OCI-LY7 (cell line): ENCODE measurements at regions of chr5 and their contacts with region 1.

Region 1: GRCh38 chr5:138178516-138179276 is at the starts of genes BRD8 and KIF20A:
- DNase-seq: peak; percentile 95
- H3K4me3 ChIP-seq: peak within 1 kb of the TSS; percentile 88
- H3K27ac ChIP-seq: peak within 1 kb of the TSS; percentile 76
- H3K4me1 ChIP-seq: peaks cover 17% of the 10 kb centered on the region
- CTCF ChIP-seq: no peak
- total RNA-seq, gene BRD8: 57.7 and 71.7 TPM in 2 replicates
- total RNA-seq, gene KIF20A: 63.1 and 74.5 TPM in 2 replicates

Region 2: DNA sequence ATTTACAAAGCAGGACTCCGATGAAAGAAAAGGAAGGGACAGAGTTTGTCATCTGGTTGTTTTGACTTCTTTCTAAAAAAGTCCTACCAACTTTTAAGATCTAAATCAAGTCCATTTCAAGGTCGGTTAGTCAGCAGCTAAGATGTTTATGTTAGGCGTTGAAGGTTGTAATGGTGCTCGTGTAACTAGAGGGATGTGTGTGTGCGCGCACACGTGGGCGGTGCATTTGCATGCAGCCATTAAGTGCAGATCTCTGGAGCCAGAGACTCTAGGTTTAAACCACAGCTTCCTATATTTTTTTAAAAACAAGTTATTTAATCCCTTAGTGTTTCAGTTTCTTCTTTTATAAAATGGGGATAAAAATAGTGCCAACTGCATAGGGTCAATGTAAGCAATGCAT is 1908.7 kb before region 1 on chr5:
- CTCF ChIA-PET with region 1: no interaction called
- POLR2A ChIA-PET with region 1: no interaction called
- intact Hi-C with region 1: no loop called
- DNase-seq: no peak
- H3K4me3 ChIP-seq: no peak overlapping the region
- H3K27ac ChIP-seq: no peak overlapping the region
- H3K4me1 ChIP-seq: no peaks in the 10 kb centered on the region
- CTCF ChIP-seq: no peak

Region 3: DNA sequence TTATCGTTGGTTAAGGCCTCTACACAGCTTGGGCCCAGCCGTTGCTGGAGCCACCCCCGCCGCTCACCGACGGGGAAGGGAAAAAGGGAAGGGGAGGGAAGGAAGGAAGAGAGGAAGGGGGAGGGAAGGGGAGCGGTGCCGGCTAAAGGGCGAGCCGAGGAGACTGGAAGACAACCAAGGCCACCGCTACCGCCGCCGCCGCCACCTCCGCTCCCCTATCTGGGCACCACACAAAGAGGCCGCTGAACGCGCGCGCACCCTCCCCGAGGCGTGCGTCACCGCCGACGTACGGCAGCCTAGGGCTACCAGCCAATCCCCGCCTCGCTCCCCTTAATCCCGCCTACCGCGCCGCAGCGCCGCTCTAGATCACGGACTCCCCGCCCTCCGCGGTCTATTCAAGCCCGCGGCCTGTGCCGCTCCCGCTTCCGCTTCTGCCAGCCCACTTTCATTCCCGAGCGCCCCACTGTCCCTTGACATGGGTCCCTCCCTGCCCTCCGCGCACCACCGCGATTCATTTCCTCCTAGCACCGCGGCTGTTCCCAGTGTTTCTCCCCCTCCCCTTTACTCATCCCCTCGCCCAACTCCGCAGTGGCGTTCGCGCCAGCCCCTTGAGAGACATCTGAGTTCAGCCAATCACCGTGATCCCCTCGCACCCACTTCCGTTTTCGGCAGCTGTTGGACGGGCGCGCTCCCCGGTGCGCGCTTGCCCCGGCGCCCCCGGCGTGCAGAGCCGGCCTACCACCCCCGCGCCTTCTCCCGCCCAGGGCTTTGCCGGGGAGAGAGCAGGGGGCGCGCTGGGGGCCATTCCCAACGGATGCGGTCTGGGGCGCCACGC is 424.4 kb before region 1 on chr5 and contains the start of gene HNRNPA0:
- CTCF ChIA-PET with region 1: no interaction called
- POLR2A ChIA-PET with region 1: interaction called, 4 read pairs
- intact Hi-C with region 1: loop called (anchors 1 kb)
- DNase-seq: peak; percentile 98
- H3K4me3 ChIP-seq: peak within 1 kb of the TSS; percentile 99
- H3K27ac ChIP-seq: peak within 1 kb of the TSS; percentile 72
- H3K4me1 ChIP-seq: peaks cover 23% of the 10 kb centered on the region
- CTCF ChIP-seq: no peak
- total RNA-seq, gene HNRNPA0: 20.6 and 25.8 TPM in 2 replicates

Region 4: GRCh38 chr5:138282920-138283742 is 104.4 kb after region 1 on chr5:
- CTCF ChIA-PET with region 1: no interaction called
- POLR2A ChIA-PET with region 1: no interaction called
- intact Hi-C with region 1: loop called (anchors 2 kb)
- DNase-seq: peak; percentile 30
- H3K4me3 ChIP-seq: no peak overlapping the region
- H3K27ac ChIP-seq: no peak overlapping the region
- H3K4me1 ChIP-seq: no peaks in the 10 kb centered on the region
- CTCF ChIP-seq: peak; percentile 64

Region 5: DNA sequence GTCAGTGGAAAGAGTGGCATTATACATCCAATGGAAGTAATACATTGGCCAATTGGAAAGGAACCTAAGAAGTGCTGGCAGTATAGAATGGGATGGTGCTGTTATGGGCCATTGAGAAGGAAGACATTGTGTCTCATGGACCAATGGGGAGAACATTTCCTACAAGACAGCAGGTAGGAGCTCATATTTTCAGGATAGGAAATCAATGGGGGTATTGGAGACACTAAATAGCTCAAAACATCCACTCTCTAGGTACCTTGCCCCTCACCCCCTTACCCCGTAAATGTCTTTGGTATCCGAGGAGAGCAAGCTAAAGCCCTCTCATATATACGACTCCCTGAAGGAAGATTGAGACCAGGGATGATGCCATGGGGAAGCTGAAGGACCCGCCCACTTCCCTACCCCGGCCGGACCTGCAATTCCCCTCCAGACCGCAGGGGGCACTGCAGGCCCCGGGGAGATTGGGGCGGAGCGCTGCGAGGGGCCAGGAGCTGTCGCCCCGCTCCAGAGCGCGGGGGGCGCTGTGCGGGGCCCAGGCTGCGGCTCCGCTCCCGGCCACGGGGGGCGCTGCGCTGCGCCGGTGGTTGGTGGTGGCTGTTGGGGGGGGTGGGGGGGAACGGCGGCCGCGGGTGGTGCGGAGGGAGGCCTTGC is 173.5 kb after region 1 on chr5 and contains the start of gene KDM3B:
- CTCF ChIA-PET with region 1: interaction called, 3 read pairs
- POLR2A ChIA-PET with region 1: interaction called, 11 read pairs
- intact Hi-C with region 1: loop called (anchors 2 kb)
- DNase-seq: peak; percentile 90
- H3K4me3 ChIP-seq: peak within 1 kb of the TSS; percentile 98
- H3K27ac ChIP-seq: peak within 1 kb of the TSS; percentile 73
- H3K4me1 ChIP-seq: peaks cover 19% of the 10 kb centered on the region
- CTCF ChIP-seq: peak; percentile 91
- total RNA-seq, gene KDM3B: 51.1 and 57.1 TPM in 2 replicates

Region 6: GRCh38 chr5:138449501-138450239 is 271.0 kb after region 1 on chr5:
- CTCF ChIA-PET with region 1: interaction called, 10 read pairs
- POLR2A ChIA-PET with region 1: no interaction called
- intact Hi-C with region 1: loop called (anchors 1 kb)
- DNase-seq: peak; percentile 81
- H3K4me3 ChIP-seq: no peak overlapping the region
- H3K27ac ChIP-seq: no peak overlapping the region
- H3K4me1 ChIP-seq: peaks cover 3% of the 10 kb centered on the region
- CTCF ChIP-seq: peak; percentile 92

Region 7: GRCh38 chr5:138472353-138472752 is 293.7 kb after region 1 on chr5:
- CTCF ChIA-PET with region 1: no interaction called
- POLR2A ChIA-PET with region 1: no interaction called
- intact Hi-C with region 1: no loop called
- DNase-seq: no peak
- H3K4me3 ChIP-seq: no peak overlapping the region
- H3K27ac ChIP-seq: no peak overlapping the region
- H3K4me1 ChIP-seq: no peaks in the 10 kb centered on the region
- CTCF ChIP-seq: no peak